Activated CD8-positive, alpha-beta memory T cell treated with anti-CD3 and anti-CD28 coated beads, Interleukin-2, amount 10 ng/mL, durations not matched to agents 7 days and 5 days (primary cell): ENCODE measurements at regions of chr1 and their contacts with region 1.

Region 1: GRCh38 chr1:185317034-185317885 is at the start of gene IVNS1ABP:
- DNase-seq: peak; percentile 97
- ATAC-seq: peak; percentile 75
- H3K4me3 Mint-ChIP-seq: peak within 1 kb of the TSS; percentile 99
- H3K27ac Mint-ChIP-seq: peak within 1 kb of the TSS; percentile 97
- H3K4me1 Mint-ChIP-seq: peaks cover 44% of the 10 kb centered on the region
- H3K27me3 Mint-ChIP-seq: no peaks in the 10 kb centered on the region
- total RNA-seq, gene IVNS1ABP: 251 to 509 TPM

Region 2: GRCh38 chr1:185338719-185339622 is 21.7 kb after region 1 on chr1:
- CTCF ChIA-PET with region 1: interaction called, 32 read pairs
- DNase-seq: peak; percentile 94
- ATAC-seq: peak; percentile 90
- H3K4me3 Mint-ChIP-seq: peak overlapping the region; percentile 32
- H3K27ac Mint-ChIP-seq: peak overlapping the region; percentile 85
- H3K4me1 Mint-ChIP-seq: peaks cover 54% of the 10 kb centered on the region
- H3K27me3 Mint-ChIP-seq: no peaks in the 10 kb centered on the region

Region 3: DNA sequence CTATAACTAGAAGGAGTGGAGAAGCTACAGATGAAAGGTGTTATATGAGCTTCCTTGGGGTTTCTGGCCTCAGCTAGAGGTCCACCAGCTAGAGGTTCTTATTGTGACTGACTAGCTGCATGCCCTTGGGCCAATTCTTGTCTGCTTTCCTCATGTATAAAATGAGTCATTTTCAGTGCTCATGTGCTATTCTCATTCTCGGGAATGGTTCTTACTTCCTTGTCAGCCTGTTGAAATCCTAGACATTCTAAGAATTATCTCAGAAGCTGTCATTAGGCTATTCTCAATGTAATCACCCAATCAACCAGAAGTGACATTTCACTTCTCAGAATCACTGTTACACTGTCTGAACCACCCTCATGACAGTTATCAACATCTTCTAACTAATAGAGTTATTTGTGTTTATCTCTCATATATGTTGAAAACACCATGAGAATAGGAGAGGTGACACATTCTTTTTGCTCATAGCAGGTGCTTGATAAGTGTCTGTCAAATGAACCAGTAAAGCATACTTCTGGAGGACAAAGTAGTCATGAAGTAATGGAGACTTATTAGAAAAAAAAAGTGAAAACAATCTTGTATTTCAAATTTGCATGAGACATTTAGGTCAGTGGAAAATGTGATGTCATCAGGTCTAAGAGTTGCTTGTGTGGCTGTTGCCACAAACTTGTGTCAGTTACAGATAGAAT is 122.6 kb after region 1 on chr1:
- CTCF ChIA-PET with region 1: interaction called, 23 read pairs
- DNase-seq: peak; percentile 82
- ATAC-seq: peak; percentile 87
- H3K4me3 Mint-ChIP-seq: no peak overlapping the region
- H3K27ac Mint-ChIP-seq: no peak overlapping the region
- H3K4me1 Mint-ChIP-seq: peaks cover 32% of the 10 kb centered on the region
- H3K27me3 Mint-ChIP-seq: no peaks in the 10 kb centered on the region

Region 4: DNA sequence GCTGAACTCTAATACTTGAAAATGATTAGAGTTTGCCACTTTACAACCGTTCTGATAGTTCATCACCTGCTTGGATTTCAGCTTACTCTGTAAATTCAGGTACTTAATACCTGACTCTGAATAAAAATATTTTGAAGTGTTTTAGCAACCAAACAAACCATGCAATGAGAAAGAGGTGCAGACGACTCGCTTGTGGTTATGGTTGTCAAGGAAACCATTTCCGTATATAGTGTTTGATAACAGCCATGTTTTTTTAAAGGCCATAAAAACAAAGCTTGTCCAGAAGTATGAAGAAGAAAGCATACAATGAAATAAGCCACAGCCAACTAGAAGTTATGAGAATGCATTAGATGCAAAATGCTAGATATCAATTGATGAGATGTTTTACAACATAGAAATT is 249.7 kb after region 1 on chr1:
- CTCF ChIA-PET with region 1: interaction called, 16 read pairs
- DNase-seq: peak; percentile 79
- ATAC-seq: peak; percentile 78
- H3K4me3 Mint-ChIP-seq: peak overlapping the region; percentile 39
- H3K27ac Mint-ChIP-seq: peak overlapping the region; percentile 88
- H3K4me1 Mint-ChIP-seq: peaks cover 51% of the 10 kb centered on the region
- H3K27me3 Mint-ChIP-seq: no peaks in the 10 kb centered on the region

Region 5: DNA sequence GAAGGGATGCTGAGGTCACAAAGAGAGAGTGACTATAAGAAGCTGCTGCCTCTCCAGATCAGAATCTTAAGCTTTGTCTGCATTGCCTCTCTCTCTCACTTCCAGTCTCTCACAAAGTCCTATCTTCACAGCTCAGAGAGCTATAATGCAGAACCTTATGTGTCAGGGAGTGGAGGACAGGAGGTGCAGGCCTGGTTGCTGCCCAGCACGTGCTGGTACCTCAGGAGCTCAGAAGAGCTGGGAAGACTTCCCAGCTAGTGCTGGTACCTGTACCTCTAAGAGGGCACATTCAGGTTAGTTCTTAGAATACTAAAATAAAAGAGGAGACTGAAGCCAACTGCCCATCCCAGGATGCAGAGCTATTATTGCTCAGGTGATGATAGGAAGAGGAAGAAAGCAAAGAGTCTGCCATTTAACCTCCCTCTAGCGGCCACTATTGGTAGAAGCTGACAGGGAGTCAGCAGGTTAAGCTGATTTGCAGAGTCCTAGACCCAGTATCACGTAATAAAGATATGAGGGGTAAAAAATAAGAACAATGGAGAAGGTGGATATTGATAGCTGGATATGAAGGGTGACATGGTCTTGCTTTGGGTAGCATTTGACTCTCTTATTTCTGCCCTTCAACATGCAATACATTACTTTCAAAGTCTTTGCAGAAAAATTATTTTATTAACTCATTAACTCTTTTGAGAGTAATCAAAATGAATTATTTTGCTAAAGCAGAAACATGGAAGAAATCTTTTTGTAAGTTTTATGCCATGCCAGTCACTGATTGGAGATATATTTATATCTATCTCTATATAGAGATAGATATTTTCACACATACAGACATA is 278.8 kb after region 1 on chr1:
- CTCF ChIA-PET with region 1: interaction called, 16 read pairs
- DNase-seq: peak; percentile 64
- ATAC-seq: peak; percentile 53
- H3K4me3 Mint-ChIP-seq: no peak overlapping the region
- H3K27ac Mint-ChIP-seq: no peak overlapping the region
- H3K4me1 Mint-ChIP-seq: peaks cover 23% of the 10 kb centered on the region
- H3K27me3 Mint-ChIP-seq: no peaks in the 10 kb centered on the region